Activated CD4-positive, alpha-beta memory T cell treated with anti-CD3 and anti-CD28 coated beads for 36 hours (primary cell): ENCODE measurements at regions of chr5 and their contacts with region 1.

Region 1: GRCh38 chr5:134904630-134905245 is at the start of gene PCBD2:
- DNase-seq: peak; percentile 96
- H3K4me3 Mint-ChIP-seq: peak within 1 kb of the TSS; percentile 95
- H3K27ac Mint-ChIP-seq: peak within 1 kb of the TSS; percentile 99
- H3K4me1 Mint-ChIP-seq: peaks cover 17% of the 10 kb centered on the region
- H3K27me3 Mint-ChIP-seq: no peaks in the 10 kb centered on the region
- total RNA-seq, gene PCBD2: 9.8 to 13.2 TPM

Region 2: DNA sequence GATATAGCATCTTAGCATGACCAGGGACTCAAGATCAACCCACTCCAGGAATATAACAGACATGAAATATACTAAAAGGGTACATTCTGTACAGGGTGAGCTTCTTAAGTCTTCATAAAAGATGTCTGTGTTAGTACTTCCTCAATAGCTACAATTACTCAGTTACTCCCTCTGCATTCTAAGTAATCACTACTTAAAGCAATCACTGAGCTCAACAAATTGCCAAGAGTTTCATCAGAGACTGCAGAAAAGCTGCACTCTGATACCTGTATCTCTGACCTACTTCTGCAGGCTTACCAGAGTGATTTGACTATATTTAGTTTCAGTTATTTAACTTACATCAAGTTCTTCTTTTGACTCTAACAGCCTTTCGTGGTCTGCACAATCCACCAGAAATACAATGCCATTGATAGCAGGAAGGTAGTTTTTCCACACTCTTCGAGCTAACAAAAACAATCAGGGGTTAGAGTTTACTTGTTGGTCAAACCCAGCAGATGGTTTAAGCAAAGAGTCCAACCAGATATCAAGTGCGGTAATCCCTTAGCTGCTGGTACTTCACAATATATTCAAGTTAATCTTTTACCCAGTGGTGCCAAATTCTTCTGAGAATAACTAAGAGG is 295.4 kb before region 1 on chr5:
- CTCF ChIA-PET with region 1: no interaction called
- POLR2A ChIA-PET with region 1: no interaction called
- intact Hi-C with region 1: loop called (anchors 10 kb)
- DNase-seq: peak; percentile 19
- H3K4me3 Mint-ChIP-seq: peak overlapping the region; percentile 52
- H3K27ac Mint-ChIP-seq: peak overlapping the region; percentile 97
- H3K4me1 Mint-ChIP-seq: peaks cover 54% of the 10 kb centered on the region
- H3K27me3 Mint-ChIP-seq: no peaks in the 10 kb centered on the region

Region 3: DNA sequence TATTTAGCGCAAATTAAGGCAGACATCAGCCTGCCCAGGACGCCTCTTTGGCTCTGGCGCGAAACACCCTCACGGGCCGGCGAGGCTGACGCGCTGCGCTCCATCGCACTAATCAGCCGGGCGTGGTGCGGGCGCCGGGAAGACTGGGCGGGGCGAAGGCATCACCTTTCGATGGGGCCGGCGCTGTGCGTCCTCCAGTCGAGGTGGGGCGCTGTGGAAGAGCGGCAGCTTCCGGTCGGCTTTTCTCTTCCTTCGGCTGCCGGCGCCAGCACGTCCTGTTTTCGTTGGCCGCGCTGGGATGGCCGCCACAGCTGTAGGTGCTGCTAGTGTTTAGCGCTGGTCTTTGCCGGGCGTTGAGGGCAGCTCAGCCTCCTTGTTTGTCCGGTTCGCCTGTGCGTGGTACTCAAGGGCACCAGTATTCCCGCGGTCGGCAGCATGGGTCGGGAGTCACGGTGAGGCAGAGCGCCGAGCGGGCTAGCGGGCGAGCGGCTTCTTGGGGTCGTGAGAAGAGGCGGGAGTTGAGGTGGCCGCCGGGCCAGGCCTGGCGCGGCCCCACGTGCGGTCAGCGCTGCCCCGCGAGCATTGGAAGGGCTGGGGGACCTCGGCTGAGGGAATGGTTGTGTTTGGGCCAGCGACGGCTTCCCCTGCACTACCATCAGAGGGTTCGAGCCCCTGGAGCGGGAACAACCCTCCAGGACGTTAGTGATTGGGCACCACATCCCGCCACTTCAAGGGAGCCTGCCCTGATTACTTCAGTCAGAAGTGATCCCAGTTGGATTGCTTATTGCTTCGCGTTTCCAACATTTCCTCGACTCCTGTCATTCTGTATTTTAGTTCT is 146.0 kb before region 1 on chr5 and contains the start of gene DDX46:
- CTCF ChIA-PET with region 1: interaction called, 15 read pairs
- POLR2A ChIA-PET with region 1: interaction called, 7 read pairs
- intact Hi-C with region 1: loop called (anchors 1 kb)
- DNase-seq: peak; percentile 97
- H3K4me3 Mint-ChIP-seq: peak within 1 kb of the TSS; percentile 100
- H3K27ac Mint-ChIP-seq: peak within 1 kb of the TSS; percentile 87
- H3K4me1 Mint-ChIP-seq: peaks cover 34% of the 10 kb centered on the region
- H3K27me3 Mint-ChIP-seq: no peaks in the 10 kb centered on the region
- total RNA-seq, gene DDX46: 67.4 to 68.0 TPM

Region 4: DNA sequence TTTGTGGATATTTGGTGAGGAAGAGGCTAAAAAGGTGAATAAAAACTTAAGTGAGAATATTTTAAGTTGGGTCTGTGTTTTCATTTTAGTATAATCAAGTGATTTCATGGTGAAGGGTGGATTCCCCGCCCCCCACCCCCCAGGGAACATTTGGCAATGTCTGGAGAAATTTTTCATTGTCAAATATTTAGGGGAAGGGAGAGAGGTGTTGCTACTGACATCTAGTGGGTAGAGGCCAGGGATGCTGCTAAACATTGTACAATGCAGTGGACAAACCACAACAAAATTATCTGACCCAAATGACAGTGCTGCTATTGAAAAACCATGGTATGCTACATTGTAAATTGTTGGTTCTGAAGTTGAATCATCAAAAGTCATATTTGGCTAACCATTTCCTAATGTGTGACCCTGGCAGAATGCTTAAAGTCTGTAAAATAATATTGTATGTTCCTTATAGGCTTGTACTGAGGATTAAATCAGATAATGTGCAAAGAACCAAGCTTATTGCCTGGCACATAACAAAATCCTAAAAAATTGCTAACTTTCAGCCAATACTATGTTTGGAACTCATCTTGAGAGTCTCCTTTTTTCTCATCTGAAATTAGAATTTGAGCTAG is 53.3 kb before region 1 on chr5:
- CTCF ChIA-PET with region 1: interaction called, 16 read pairs
- POLR2A ChIA-PET with region 1: interaction called, 34 read pairs
- intact Hi-C with region 1: no loop called
- DNase-seq: no peak
- H3K4me3 Mint-ChIP-seq: no peak overlapping the region
- H3K27ac Mint-ChIP-seq: no peak overlapping the region
- H3K4me1 Mint-ChIP-seq: peaks cover 25% of the 10 kb centered on the region
- H3K27me3 Mint-ChIP-seq: no peaks in the 10 kb centered on the region

Region 5: DNA sequence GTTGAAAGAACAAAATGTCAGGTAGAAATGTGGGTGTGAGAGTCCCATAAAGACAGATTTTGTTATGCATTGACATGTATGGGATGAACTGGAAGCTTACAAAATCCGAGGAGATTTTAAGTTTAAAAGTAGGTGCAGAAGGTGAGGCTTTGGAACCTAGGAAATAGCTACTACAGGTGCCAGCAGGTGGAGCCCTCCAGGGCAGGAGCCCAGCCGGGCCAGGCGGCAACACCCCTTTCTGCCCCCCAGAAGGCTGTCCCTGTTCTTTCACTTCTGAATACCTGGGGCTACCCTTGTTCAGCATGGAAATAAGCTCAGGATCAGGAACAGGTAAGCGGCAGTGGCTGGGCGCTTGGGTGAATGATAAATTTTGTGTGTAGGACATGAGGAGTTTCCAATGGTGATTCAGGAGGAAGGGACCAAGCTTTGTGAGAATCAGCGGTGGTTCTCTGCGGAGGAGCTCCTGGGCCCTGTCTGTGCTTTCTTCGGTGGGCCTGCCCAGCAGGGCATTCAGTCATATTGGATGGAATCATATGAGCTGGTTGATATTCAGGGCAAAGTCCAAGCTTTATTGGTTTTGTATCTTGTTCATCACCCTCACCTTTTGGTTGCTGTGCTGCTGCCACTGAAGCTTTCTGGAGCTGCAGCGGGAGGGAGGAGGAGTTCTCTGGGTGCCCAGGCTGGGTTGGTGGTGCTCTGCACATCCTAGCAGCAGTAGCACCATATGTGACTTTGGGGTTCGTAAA is 12.5 kb after region 1 on chr5:
- CTCF ChIA-PET with region 1: interaction called, 25 read pairs
- POLR2A ChIA-PET with region 1: interaction called, 31 read pairs
- intact Hi-C with region 1: loop called (anchors 1 kb)
- DNase-seq: no peak
- H3K4me3 Mint-ChIP-seq: no peak overlapping the region
- H3K27ac Mint-ChIP-seq: no peak overlapping the region
- H3K4me1 Mint-ChIP-seq: peaks cover 31% of the 10 kb centered on the region
- H3K27me3 Mint-ChIP-seq: no peaks in the 10 kb centered on the region